CD8-positive, alpha-beta T cell (primary cell): ENCODE measurements at regions of chr17 and their contacts with region 1.

Region 1: GRCh38 chr17:67993596-67994361 is 2.5 kb downstream of the C17orf58 start:
- DNase-seq: peak in 4 of 9 experiments; percentile 57 to 89 (median 63)
- ATAC-seq: peak; percentile 59
- H3K4me3 ChIP-seq: peak overlapping the region; percentile 60 to 65
- H3K4me3 Mint-ChIP-seq: peak overlapping the region; percentile 86
- H3K27ac ChIP-seq: peak overlapping the region; percentile 42 to 65
- H3K27ac Mint-ChIP-seq: peak overlapping the region; percentile 22
- H3K4me1 ChIP-seq: peaks cover 28% of the 10 kb centered on the region
- H3K4me1 Mint-ChIP-seq: peaks cover 32% of the 10 kb centered on the region
- H3K27me3 ChIP-seq: no peaks in the 10 kb centered on the region
- H3K27me3 Mint-ChIP-seq: peaks cover 20% of the 10 kb centered on the region
- CTCF ChIP-seq: no peak

Region 2: DNA sequence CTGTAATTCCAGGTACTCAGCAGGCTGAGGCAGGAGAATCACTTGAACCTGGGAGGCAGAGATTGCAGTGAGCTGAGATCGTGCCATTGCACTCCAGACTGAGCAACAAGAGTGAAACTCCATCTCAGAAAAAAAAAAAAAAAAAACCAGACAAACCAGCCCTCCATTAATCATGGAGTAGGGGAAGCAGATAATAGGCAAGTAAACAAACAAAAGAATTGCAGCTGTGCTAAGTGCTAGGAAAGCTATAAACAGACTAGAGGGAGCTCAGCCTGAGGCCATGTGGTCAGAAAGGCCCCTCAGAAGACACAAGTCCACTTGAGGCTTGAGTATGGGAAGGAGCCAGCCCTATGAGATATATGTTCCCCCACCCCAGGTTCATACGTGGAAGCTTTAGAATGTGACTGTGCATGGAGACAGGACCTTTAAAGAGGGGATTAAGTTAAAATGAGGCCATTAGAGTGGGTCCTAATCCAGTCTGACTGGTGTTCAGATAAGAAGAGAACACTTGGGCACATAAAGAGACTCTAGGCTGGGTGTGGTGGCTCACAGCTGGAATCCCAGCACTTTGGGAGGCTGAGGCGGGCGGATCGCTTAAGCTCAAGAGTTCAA is 408.7 kb before region 1 on chr17:
- CTCF ChIA-PET with region 1: no interaction called
- POLR2A ChIA-PET with region 1: no interaction called
- intact Hi-C with region 1: no loop called
- DNase-seq: no peak
- ATAC-seq: no peak
- H3K4me3 ChIP-seq: no peak overlapping the region
- H3K4me3 Mint-ChIP-seq: no peak overlapping the region
- H3K27ac ChIP-seq: no peak overlapping the region
- H3K27ac Mint-ChIP-seq: no peak overlapping the region
- H3K4me1 ChIP-seq: no peaks in the 10 kb centered on the region
- H3K4me1 Mint-ChIP-seq: peaks cover 34% of the 10 kb centered on the region
- H3K27me3 ChIP-seq: no peaks in the 10 kb centered on the region
- H3K27me3 Mint-ChIP-seq: no peaks in the 10 kb centered on the region
- CTCF ChIP-seq: no peak

Region 3: GRCh38 chr17:68011199-68011665 is 17.5 kb after region 1 on chr17:
- CTCF ChIA-PET with region 1: interaction called, 3 read pairs
- POLR2A ChIA-PET with region 1: no interaction called
- intact Hi-C with region 1: loop called in 1 of 2 experiments (anchors 2 kb)
- DNase-seq: peak in 8 of 9 experiments; percentile 45 to 75 (median 66)
- ATAC-seq: peak; percentile 57
- H3K4me3 ChIP-seq: peak overlapping the region; percentile 4 to 31
- H3K4me3 Mint-ChIP-seq: peak overlapping the region; percentile 50
- H3K27ac ChIP-seq: no peak overlapping the region
- H3K27ac Mint-ChIP-seq: no peak overlapping the region
- H3K4me1 ChIP-seq: no peaks in the 10 kb centered on the region
- H3K4me1 Mint-ChIP-seq: peaks cover 7% of the 10 kb centered on the region
- H3K27me3 ChIP-seq: no peaks in the 10 kb centered on the region
- H3K27me3 Mint-ChIP-seq: no peaks in the 10 kb centered on the region
- CTCF ChIP-seq: peak; percentile 77

Region 4: DNA sequence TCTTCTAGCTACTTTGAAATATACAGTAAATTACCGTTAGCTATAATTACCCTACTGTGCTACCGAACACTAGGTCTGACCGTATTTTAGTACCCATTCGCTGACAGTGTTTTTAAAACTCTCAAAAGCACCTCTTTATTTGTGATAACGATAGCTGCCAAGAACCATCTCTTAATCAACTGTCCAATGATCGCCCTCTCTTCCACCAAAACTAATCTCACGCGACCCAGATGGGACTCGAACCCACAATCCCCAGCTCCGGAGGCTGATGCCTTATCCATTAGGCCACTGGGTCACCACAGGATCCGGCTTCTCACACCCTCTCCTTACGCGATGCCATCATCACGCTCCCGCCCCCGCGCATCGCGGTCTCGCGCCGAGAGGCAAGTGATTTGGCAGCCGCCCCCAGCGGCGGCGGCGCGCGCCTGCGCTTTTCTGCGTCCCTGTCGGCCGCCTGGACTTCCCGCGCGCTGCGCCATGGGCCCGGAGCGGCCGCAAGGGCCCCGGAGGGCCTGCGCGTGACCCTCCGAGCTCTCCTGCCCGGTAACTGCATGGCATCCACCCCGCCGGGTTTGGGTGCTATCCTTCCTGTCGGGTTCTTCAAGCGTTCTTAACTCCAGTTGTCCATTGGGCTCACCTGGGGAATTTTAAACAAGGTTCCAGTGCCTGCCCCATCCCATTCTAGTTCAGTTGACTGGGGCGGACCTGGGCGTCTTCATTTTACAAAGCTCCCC is 26.1 kb after region 1 on chr17:
- CTCF ChIA-PET with region 1: interaction called, 4 read pairs
- POLR2A ChIA-PET with region 1: interaction called, 6 read pairs
- intact Hi-C with region 1: loop called in 1 of 2 experiments (anchors 1 kb)
- DNase-seq: peak; percentile 93 to 99 (median 96)
- ATAC-seq: peak; percentile 92
- H3K4me3 ChIP-seq: peak overlapping the region; percentile 64 to 71
- H3K4me3 Mint-ChIP-seq: peak overlapping the region; percentile 84
- H3K27ac ChIP-seq: peak overlapping the region; percentile 58 to 64
- H3K27ac Mint-ChIP-seq: peak overlapping the region; percentile 93
- H3K4me1 ChIP-seq: peaks cover 6% of the 10 kb centered on the region
- H3K4me1 Mint-ChIP-seq: peaks cover 23% of the 10 kb centered on the region
- H3K27me3 ChIP-seq: no peaks in the 10 kb centered on the region
- H3K27me3 Mint-ChIP-seq: no peaks in the 10 kb centered on the region
- CTCF ChIP-seq: peak; percentile 33

Region 5: GRCh38 chr17:69327060-69327831 is 1333.5 kb after region 1 on chr17 and contains the start of gene ABCA5:
- CTCF ChIA-PET with region 1: no interaction called
- POLR2A ChIA-PET with region 1: no interaction called
- intact Hi-C with region 1: loop called (anchors 5 kb)
- DNase-seq: peak; percentile 72 to 98 (median 87)
- ATAC-seq: peak; percentile 96
- H3K4me3 ChIP-seq: peak within 1 kb of the TSS; percentile 79 to 94
- H3K4me3 Mint-ChIP-seq: peak within 1 kb of the TSS; percentile 96
- H3K27ac ChIP-seq: peak within 1 kb of the TSS; percentile 85 to 92
- H3K27ac Mint-ChIP-seq: peak within 1 kb of the TSS; percentile 97
- H3K4me1 ChIP-seq: peaks cover 17% of the 10 kb centered on the region
- H3K4me1 Mint-ChIP-seq: peaks cover 30% of the 10 kb centered on the region
- H3K27me3 ChIP-seq: peaks cover 0 to 3% of the 10 kb centered on the region in 2 experiments
- H3K27me3 Mint-ChIP-seq: peaks cover 7% of the 10 kb centered on the region
- CTCF ChIP-seq: no peak
- total RNA-seq, gene ABCA5: 21.8 to 22.4 TPM